MCF 10A (cell line): ENCODE measurements at regions of chr2 and their contacts with region 1.

Region 1: DNA sequence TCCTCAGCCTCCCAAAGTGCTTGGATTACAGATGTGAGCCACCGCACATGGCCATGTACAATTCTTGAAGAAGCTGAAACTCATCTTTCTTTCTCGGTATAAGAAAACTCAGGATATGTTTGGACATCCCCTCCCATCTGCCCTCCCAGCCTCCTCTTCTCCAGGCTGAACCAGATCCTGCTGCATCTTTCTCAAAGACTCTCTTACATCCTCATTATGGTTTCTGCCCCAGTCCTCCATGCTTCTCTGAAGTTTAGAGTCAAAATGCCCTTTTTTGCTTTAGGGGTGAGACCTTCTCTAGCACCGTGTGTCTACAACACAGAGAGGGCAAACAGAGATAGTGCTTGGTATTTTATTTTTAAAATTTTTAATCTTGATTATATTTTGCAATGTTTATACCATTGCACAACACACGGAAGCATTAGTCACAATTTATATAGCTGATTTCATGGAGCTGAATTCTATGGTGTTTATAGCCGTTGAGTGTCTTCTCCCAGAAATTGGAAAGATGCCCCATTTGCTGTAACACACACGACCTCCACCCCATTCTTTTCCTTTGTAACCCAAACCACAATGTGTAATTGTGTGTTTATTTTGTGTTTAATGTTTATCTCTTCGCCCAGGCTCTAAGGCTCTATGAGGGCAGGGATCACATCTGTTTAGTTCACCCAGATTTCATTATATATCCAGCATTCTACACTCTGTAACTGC is 206.0 kb upstream of the TNP1 start:
- DNase-seq: peak; percentile 80
- H3K4me3 Mint-ChIP-seq: no peak overlapping the region
- H3K27ac Mint-ChIP-seq: peak overlapping the region; percentile 5
- H3K4me1 Mint-ChIP-seq: peaks cover 8% of the 10 kb centered on the region
- H3K27me3 Mint-ChIP-seq: peaks cover 12% of the 10 kb centered on the region
- CTCF ChIP-seq: no peak

Region 2: DNA sequence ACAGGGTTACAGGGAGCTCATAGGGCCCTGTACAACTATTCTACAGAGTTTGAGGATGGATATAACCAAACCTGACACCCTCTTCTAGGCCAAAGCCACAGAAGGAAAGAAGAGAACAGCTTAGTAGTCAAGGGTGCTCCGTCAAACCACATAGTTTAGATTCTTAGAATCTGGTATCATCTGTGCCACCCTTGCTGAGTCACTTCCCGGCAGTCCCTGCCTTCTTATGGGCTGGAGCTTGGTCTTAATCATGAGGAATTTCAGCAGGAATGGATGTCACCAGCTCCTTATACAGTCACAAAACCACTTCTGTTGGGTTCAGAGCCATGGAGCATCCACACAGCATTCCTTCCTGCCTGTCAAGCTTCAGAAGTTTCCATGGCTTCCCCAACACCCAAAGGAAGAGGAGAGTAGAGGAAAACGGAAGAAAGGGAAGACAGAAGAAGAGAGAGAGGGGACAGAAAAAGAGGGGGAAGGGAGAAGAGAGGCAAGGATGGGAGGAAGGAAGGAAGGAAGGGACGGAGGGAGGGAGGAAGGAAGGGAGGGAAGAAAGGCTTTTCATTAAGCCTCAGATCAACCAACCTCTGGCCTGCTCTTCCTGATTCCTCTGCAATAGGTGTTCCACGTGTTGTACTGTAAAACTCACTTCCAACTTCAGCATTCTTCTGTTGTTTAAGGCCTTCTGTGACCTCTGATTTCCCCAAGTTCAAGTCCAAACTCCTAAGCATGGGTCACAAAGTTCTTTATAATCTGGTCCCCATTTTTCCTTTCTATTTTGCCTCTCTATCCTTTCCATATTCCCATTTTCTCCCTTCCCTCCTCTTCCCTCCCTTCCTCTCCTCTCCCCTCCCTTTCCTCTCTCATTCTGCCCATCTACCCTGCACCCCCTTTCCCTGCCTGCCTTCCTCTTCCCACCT is 40.1 kb after region 1 on chr2:
- CTCF ChIA-PET with region 1: interaction called, 3 read pairs
- POLR2A ChIA-PET with region 1: interaction called, 7 read pairs
- intact Hi-C with region 1: loop called (anchors 1 kb)
- DNase-seq: peak; percentile 64
- H3K4me3 Mint-ChIP-seq: no peak overlapping the region
- H3K27ac Mint-ChIP-seq: peak overlapping the region; percentile 99
- H3K4me1 Mint-ChIP-seq: peaks cover 42% of the 10 kb centered on the region
- H3K27me3 Mint-ChIP-seq: no peaks in the 10 kb centered on the region
- CTCF ChIP-seq: no peak